Calu3 (cell line): ENCODE measurements at regions of chr18 and their contacts with region 1.

Region 1: GRCh38 chr18:59996370-59996966 is 96.7 kb downstream of the PMAIP1 start:
- DNase-seq: peak; percentile 67
- H3K4me3 Mint-ChIP-seq: no peak overlapping the region
- H3K27ac Mint-ChIP-seq: no peak overlapping the region
- H3K4me1 Mint-ChIP-seq: no peaks in the 10 kb centered on the region
- H3K27me3 Mint-ChIP-seq: no peaks in the 10 kb centered on the region
- CTCF ChIP-seq: peak; percentile 73

Region 2: GRCh38 chr18:59228351-59228750 is 768.1 kb before region 1 on chr18:
- CTCF ChIA-PET with region 1: no interaction called
- intact Hi-C with region 1: no loop called
- DNase-seq: no peak
- H3K4me3 Mint-ChIP-seq: no peak overlapping the region
- H3K27ac Mint-ChIP-seq: no peak overlapping the region
- H3K4me1 Mint-ChIP-seq: no peaks in the 10 kb centered on the region
- H3K27me3 Mint-ChIP-seq: peaks cover 93% of the 10 kb centered on the region
- CTCF ChIP-seq: no peak

Region 3: GRCh38 chr18:59927246-59927825 is 69.1 kb before region 1 on chr18:
- CTCF ChIA-PET with region 1: no interaction called
- intact Hi-C with region 1: no loop called
- DNase-seq: peak; percentile 39
- H3K4me3 Mint-ChIP-seq: no peak overlapping the region
- H3K27ac Mint-ChIP-seq: peak overlapping the region; percentile 13
- H3K4me1 Mint-ChIP-seq: peaks cover 31% of the 10 kb centered on the region
- H3K27me3 Mint-ChIP-seq: no peaks in the 10 kb centered on the region
- CTCF ChIP-seq: no peak

Region 4: DNA sequence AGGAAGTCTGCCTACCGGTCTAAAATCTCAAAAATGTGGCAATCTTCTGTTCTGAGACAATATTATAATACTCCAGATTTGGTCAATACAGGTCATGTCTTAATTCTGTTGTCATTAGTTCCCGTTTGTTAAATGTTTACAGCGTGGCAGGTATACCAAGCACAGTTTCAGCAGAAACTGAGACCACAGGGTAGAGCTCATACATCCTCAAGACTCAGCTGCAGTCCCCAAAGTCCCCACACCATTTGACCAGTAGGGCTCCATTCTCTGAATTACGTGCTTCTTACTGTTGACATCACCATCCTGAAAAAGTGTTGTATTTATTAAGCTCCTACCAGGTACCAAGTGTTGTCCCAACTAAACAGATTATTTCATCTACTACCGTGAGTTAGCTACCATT is 219.0 kb after region 1 on chr18:
- CTCF ChIA-PET with region 1: no interaction called
- intact Hi-C with region 1: loop called (anchors 10 kb)
- DNase-seq: no peak
- H3K4me3 Mint-ChIP-seq: no peak overlapping the region
- H3K27ac Mint-ChIP-seq: no peak overlapping the region
- H3K4me1 Mint-ChIP-seq: no peaks in the 10 kb centered on the region
- H3K27me3 Mint-ChIP-seq: no peaks in the 10 kb centered on the region
- CTCF ChIP-seq: no peak

Region 5: GRCh38 chr18:60549338-60549960 is 553.0 kb after region 1 on chr18:
- CTCF ChIA-PET with region 1: interaction called, 11 read pairs
- intact Hi-C with region 1: loop called (anchors 1 kb)
- DNase-seq: peak; percentile 30
- H3K4me3 Mint-ChIP-seq: no peak overlapping the region
- H3K27ac Mint-ChIP-seq: peak overlapping the region; percentile 28
- H3K4me1 Mint-ChIP-seq: no peaks in the 10 kb centered on the region
- H3K27me3 Mint-ChIP-seq: no peaks in the 10 kb centered on the region
- CTCF ChIP-seq: peak; percentile 68